HepG2 (cell line): ENCODE measurements at regions of chr12 and their contacts with region 1.

Region 1: DNA sequence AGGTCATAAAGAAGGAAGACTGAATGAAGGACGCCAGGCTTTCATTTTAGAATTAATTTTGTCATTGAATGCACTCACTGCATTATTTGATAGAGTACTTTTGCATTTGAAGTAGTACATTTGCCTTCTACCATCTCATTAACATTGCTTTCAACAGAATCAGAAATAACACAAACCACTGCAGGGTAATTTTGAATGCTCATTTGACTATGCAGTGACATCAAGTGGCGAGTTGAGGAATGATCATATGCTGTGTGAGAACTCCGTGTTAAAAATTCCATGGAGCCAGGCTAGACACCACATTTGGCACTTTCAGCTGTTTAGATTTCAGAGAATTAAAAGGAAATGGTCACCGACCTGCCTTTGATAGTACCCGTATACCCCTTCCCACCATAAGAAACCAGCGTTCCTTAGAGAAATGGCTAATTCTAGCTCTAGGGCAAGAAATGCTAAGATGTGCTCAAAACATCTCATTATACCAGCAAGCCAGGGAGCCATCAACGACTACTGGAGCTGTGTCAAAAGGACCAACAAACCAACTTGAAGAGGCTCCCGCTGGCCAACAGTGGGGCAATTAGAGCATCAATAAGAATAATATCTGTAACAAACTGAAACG is 16.5 kb downstream of the HEBP1 start:
- DNase-seq: peak; percentile 30
- ATAC-seq: peak; percentile 78
- H3K4me3 ChIP-seq: no peak overlapping the region
- H3K27ac ChIP-seq: no peak overlapping the region
- H3K4me1 ChIP-seq: no peaks in the 10 kb centered on the region
- H3K27me3 ChIP-seq: no peaks in the 10 kb centered on the region
- CTCF ChIP-seq: peak; percentile 62
- EP300 ChIP-seq: no peak
- POLR2A ChIP-seq: no peak
- RAD21 ChIP-seq: 0 out of 2 replicates have a peak, but pooled peaks have one; percentile 15

Region 2: DNA sequence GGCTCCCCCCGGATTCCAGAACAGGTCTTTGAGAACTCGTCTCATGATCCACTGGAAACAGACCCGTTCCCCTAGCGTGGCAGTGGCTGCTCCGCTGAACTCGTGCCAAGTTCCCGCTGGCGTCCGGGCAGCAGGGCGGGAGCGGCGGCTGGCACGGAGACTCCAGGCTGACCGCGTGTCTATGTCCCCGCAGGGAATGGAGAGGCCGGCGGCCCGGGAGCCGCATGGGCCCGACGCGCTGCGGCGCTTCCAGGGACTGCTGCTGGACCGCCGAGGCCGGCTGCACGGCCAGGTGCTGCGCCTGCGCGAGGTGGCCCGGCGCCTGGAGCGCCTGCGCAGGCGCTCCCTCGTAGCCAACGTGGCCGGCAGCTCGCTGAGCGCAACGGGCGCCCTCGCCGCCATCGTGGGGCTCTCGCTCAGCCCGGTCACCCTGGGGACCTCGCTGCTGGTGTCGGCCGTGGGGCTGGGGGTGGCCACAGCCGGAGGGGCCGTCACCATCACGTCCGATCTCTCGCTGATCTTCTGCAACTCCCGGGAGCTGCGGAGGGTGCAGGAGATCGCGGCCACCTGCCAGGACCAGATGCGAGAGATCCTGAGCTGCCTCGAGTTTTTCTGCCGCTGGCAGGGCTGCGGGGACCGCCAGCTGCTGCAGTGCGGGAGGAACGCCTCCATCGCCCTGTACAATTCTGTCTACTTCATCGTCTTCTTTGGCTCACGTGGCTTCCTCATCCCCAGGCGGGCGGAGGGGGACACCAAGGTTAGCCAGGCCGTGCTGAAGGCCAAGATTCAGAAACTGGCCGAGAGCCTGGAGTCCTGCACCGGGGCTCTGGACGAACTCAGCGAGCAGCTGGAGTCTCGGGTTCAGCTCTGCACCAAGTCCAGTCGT is 196.6 kb before region 1 on chr12:
- CTCF ChIA-PET with region 1: no interaction called
- POLR2A ChIA-PET with region 1: no interaction called
- in situ Hi-C with region 1: no loop called
- intact Hi-C with region 1: loop called (anchors 5 kb)
- DNase-seq: peak; percentile 32
- ATAC-seq: peak; percentile 92
- H3K4me3 ChIP-seq: peak overlapping the region in 2 of 3 experiments; percentile 18 to 51; a peak in 2 of 6 replicates
- H3K27ac ChIP-seq: no peak overlapping the region
- H3K4me1 ChIP-seq: peaks cover 37% of the 10 kb centered on the region
- H3K27me3 ChIP-seq: peaks cover 0 to 40% of the 10 kb centered on the region in 2 experiments; a peak in 4 of 5 replicates
- CTCF ChIP-seq: no peak
- EP300 ChIP-seq: no peak
- POLR2A ChIP-seq: peak in 1 of 2 experiments; percentile 50; a peak in 2 of 4 replicates
- RAD21 ChIP-seq: no peak

Region 3: GRCh38 chr12:12916135-12916944 is 67.2 kb before region 1 on chr12:
- CTCF ChIA-PET with region 1: interaction called, 31 read pairs
- POLR2A ChIA-PET with region 1: no interaction called
- in situ Hi-C with region 1: loop called (anchors 5 kb)
- intact Hi-C with region 1: loop called (anchors 1 kb)
- DNase-seq: peak; percentile 71
- ATAC-seq: peak; percentile 98
- H3K4me3 ChIP-seq: peak overlapping the region in 1 of 3 experiments; percentile 8; a peak in 1 of 6 replicates
- H3K27ac ChIP-seq: no peak overlapping the region
- H3K4me1 ChIP-seq: peaks cover 18% of the 10 kb centered on the region
- H3K27me3 ChIP-seq: peaks cover 4 to 16% of the 10 kb centered on the region in 2 experiments
- CTCF ChIP-seq: peak; percentile 98
- EP300 ChIP-seq: no peak
- POLR2A ChIP-seq: no peak
- RAD21 ChIP-seq: peak; percentile 92